ENCODE measurements at regions of chr3 and their contacts with region 1.

Region 1: GRCh38 chr3:120095226-120095978 is 1.2 kb upstream of the GSK3B start:
- DNase-seq: peak; percentile 83 to 94
- H3K4me3 ChIP-seq: peak overlapping the region; percentile 75
- H3K27ac ChIP-seq: peak overlapping the region; percentile 100
- H3K4me1 ChIP-seq: peaks cover 32% of the 10 kb centered on the region
- H3K27me3 ChIP-seq: no peaks in the 10 kb centered on the region
- CTCF ChIP-seq: no peak

Region 2: GRCh38 chr3:118882353-118882947 is 1213.0 kb before region 1 on chr3:
- CTCF ChIA-PET with region 1: no interaction called
- POLR2A ChIA-PET with region 1: no interaction called
- intact Hi-C with region 1: no loop called
- DNase-seq: peak in 1 of 2 experiments; percentile 58
- H3K4me3 ChIP-seq: no peak overlapping the region
- H3K27ac ChIP-seq: no peak overlapping the region
- H3K4me1 ChIP-seq: no peaks in the 10 kb centered on the region
- H3K27me3 ChIP-seq: no peaks in the 10 kb centered on the region
- CTCF ChIP-seq: peak; percentile 84

Region 3: GRCh38 chr3:119891944-119892721 is 203.3 kb before region 1 on chr3:
- CTCF ChIA-PET with region 1: no interaction called
- POLR2A ChIA-PET with region 1: interaction called, 5 read pairs
- intact Hi-C with region 1: loop called (anchors 5 kb)
- DNase-seq: peak in 1 of 2 experiments; percentile 10
- H3K4me3 ChIP-seq: no peak overlapping the region
- H3K27ac ChIP-seq: no peak overlapping the region
- H3K4me1 ChIP-seq: no peaks in the 10 kb centered on the region
- H3K27me3 ChIP-seq: no peaks in the 10 kb centered on the region
- CTCF ChIP-seq: peak; percentile 70

Region 4: DNA sequence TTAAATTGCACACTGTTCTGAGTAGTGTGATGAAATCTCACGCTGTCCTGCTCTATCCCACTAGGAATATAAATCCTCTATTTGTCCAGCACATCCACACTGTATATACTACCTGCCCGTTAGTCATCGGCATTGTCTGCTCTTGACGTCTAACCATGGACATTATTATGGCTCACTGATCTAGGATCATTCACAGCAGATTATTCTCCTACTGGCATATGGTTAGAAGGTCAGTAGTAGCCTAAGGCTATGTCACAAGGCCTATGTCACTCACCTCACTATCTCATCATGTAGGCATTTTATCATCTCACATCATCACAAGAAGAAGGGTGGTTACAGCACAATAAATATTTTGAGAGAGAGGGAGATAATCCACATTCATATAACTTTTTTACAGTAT is 122.1 kb before region 1 on chr3:
- CTCF ChIA-PET with region 1: no interaction called
- POLR2A ChIA-PET with region 1: no interaction called
- intact Hi-C with region 1: loop called (anchors 5 kb)
- DNase-seq: peak; percentile 34 to 86
- H3K4me3 ChIP-seq: no peak overlapping the region
- H3K27ac ChIP-seq: peak overlapping the region; percentile 45
- H3K4me1 ChIP-seq: peaks cover 25% of the 10 kb centered on the region
- H3K27me3 ChIP-seq: no peaks in the 10 kb centered on the region
- CTCF ChIP-seq: no peak

Region 5: DNA sequence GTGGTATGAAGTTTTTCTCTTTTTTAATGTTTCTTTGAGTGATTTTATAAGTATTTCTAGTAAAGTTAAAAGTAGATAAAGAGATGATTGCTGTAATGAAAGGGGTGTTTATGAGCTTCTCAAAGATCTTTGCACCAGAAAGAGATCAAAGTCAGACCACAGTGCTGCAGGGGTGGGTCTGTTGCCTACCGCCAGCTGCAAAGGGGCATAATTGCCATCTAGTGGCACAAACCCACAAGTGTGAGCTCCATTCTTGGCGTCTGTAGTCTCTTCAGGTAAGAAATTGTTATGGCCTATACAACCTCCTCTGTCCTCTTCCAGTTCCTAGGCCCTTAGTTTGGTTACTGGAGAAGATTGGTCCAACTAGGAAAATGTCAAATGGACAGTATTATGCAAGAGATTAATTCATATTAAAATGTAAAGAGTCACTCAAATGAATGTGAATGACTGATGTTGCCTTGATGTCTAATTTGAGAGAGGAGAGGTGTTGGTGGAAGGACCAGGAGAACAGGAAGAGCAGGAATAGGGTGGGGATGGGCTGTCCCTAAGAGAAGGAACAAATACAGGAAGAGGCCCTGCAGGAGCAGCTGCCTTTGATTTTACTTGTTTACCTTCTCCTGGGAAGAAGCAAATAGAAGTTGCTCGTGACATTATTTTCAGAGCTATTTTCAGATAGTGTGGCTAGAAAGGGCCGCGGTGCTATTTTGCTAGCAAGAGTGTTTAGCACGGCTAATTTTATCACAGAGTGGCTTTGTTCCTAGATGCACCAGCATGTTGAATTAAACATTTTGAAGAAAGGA is 51.9 kb after region 1 on chr3:
- CTCF ChIA-PET with region 1: interaction called, 11 read pairs
- POLR2A ChIA-PET with region 1: interaction called, 51 read pairs
- intact Hi-C with region 1: loop called (anchors 1 kb)
- DNase-seq: peak; percentile 66 to 90
- H3K4me3 ChIP-seq: peak overlapping the region; percentile 32; the same call in 1 of the 2 replicates
- H3K27ac ChIP-seq: peak overlapping the region; percentile 78
- H3K4me1 ChIP-seq: peaks cover 81% of the 10 kb centered on the region
- H3K27me3 ChIP-seq: no peaks in the 10 kb centered on the region
- CTCF ChIP-seq: peak; percentile 41; the same call in 1 of the 2 replicates

Region 6: DNA sequence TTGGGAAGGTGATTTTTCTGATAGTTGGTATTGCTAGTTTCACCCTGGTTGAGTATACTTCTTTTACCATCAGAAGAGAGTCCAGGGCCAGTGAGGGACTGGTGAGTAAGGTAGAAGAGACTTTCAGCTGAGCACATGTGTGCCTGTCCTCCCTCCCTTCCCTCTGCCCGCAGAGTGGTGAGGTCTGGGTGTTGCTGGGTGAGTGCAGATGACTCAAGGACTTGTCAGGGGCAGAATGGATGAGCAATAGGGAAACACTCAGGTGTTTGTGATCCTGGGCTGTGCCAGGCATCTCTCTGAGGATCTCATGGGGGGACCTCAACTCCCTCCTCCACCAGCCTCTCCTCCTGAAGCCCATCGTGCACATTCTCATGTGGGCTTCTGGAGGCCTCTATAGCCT is 74.8 kb after region 1 on chr3:
- CTCF ChIA-PET with region 1: interaction called, 6 read pairs
- POLR2A ChIA-PET with region 1: interaction called, 16 read pairs
- intact Hi-C with region 1: no loop called
- DNase-seq: peak; percentile 73 to 88
- H3K4me3 ChIP-seq: no peak overlapping the region
- H3K27ac ChIP-seq: peak overlapping the region; percentile 70
- H3K4me1 ChIP-seq: peaks cover 25% of the 10 kb centered on the region
- H3K27me3 ChIP-seq: no peaks in the 10 kb centered on the region
- CTCF ChIP-seq: no peak

Region 7: DNA sequence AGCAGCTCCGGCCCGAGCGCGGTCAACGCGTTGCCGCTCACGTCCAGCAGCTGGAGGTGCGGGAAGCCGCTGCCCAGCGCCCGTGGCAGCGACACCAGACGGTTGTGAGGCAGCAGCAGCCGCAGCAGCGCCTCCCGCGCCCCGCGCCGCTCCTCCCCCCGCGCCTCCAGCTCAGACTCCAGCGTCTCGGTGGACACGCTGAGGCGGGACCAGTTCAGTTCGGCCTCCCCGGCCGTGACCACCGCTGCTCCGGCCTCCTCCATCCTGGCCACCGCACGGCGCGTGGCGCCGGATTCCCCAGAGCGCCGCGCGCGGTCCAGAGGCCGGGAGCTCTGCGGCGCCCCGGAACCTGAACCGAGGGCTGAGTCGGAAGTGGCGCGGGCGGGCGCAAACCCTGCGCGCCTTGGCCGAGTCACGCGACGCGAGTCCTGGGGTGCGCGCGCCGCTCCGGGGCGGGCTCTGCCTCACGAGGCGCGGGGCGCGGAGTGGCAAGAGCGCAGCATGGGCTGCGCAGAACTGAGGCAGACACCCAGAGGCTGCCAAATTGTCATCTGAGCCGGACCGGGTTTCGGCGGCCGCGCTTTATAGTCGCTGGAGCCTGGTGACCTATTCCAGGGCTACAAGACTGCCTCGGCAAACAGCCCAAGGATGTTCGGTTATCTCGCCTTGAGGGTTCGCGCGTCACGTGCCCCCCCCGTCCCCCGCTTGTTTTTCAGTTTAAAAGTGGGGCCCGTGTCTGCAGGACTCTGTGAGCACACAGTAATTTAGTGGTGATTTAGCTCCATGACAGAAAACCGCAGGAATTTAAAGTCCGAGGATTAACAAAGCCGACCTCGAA is 253.8 kb after region 1 on chr3 and contains the start of gene LRRC58:
- CTCF ChIA-PET with region 1: interaction called, 8 read pairs
- POLR2A ChIA-PET with region 1: interaction called, 9 read pairs
- intact Hi-C with region 1: loop called (anchors 1 kb)
- DNase-seq: peak; percentile 77 to 95
- H3K4me3 ChIP-seq: peak within 1 kb of the TSS; percentile 82
- H3K27ac ChIP-seq: peak within 1 kb of the TSS; percentile 60
- H3K4me1 ChIP-seq: peaks cover 25% of the 10 kb centered on the region
- H3K27me3 ChIP-seq: no peaks in the 10 kb centered on the region
- CTCF ChIP-seq: no peak; the same call in 1 of the 2 replicates
- total RNA-seq, gene LRRC58: 22.2 and 28.9 TPM in 2 replicates